IMR-90 (cell line): ENCODE measurements at regions of chr2 and their contacts with region 1.

Region 1: DNA sequence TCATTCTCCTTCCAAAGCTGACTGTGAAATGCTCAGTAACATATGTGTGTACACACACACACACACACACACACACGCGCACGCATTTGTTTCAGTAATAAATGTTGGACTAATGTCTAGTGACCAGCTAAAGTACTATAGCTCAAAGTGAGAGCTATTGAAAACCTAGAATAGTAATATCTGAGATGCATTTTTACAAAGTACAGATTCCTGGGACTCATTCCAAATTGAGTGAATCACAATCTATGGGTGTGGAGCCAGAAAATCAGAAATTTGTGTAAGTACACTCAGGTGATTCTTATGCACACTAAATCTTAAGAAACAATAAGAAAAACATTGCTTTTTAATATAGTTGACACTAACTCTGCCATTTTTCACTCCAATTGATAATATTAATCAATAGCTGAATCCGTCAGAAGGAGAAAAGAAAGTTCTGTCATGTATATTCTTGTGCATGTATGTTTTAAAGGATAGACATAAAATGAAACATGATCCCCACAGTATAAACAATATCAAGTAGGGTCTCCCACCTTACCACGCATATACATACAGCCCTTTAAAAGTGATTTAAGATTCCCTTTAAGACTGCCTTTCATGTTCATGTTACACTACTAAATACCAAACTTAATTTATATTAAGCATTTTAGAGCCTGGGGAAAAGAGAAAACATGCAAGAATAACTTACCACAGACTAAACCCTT is 123.5 kb downstream of the ATAD2B start:
- DNase-seq: peak; percentile 79
- ATAC-seq: peak; percentile 59
- H3K4me3 ChIP-seq: no peak overlapping the region
- H3K27ac ChIP-seq: no peak overlapping the region
- H3K4me1 ChIP-seq: peaks cover 5% of the 10 kb centered on the region
- H3K27me3 ChIP-seq: no peaks in the 10 kb centered on the region
- CTCF ChIP-seq: no peak
- POLR2A ChIP-seq: no peak
- RAD21 ChIP-seq: no peak

Region 2: DNA sequence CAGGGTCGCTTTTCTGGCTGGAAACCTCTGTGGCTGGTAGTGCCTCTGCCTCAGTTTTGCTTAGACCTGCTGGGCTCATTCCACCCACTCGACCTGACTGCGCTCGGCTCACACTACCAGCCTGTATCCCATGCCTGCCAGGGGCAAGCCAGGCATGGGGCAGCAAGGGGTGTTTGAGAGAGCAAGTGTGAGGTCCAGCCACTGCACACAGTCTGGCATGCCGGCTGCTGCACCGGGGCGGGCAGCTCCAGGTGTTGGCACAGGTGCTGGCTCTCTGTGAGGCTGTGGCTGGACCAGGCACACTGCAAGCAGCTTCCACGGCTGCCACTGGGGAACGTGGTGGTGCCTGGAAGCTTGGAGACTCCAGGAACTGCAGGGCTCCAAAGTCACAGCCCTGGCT is 32.6 kb after region 1 on chr2:
- CTCF ChIA-PET with region 1: interaction called, 3 read pairs
- POLR2A ChIA-PET with region 1: no interaction called
- dilution Hi-C with region 1: no loop called
- in situ Hi-C with region 1: no loop called
- intact Hi-C with region 1: loop called (anchors 1 kb)
- DNase-seq: no peak
- ATAC-seq: no peak
- H3K4me3 ChIP-seq: no peak overlapping the region
- H3K27ac ChIP-seq: no peak overlapping the region
- H3K4me1 ChIP-seq: peaks cover 3% of the 10 kb centered on the region; the same call in 1 of the 2 replicates
- H3K27me3 ChIP-seq: no peaks in the 10 kb centered on the region
- CTCF ChIP-seq: no peak
- POLR2A ChIP-seq: no peak
- RAD21 ChIP-seq: no peak